Activated naive CD4-positive, alpha-beta T cell treated with anti-CD3 and anti-CD28 coated beads for 36 hours (primary cell): ENCODE measurements at regions of chr1 and their contacts with region 1.

Region 1: GRCh38 chr1:156096640-156097391 is 14.6 kb upstream of the MEX3A start:
- DNase-seq: peak; percentile 98
- H3K4me3 Mint-ChIP-seq: peak overlapping the region; percentile 40
- H3K27ac Mint-ChIP-seq: peak overlapping the region; percentile 99
- H3K4me1 Mint-ChIP-seq: peaks cover 49% of the 10 kb centered on the region
- H3K27me3 Mint-ChIP-seq: peaks cover 11% of the 10 kb centered on the region

Region 2: GRCh38 chr1:155920717-155921116 is 176.1 kb before region 1 on chr1:
- CTCF ChIA-PET with region 1: no interaction called
- intact Hi-C with region 1: no loop called
- DNase-seq: no peak
- H3K4me3 Mint-ChIP-seq: no peak overlapping the region
- H3K27ac Mint-ChIP-seq: no peak overlapping the region
- H3K4me1 Mint-ChIP-seq: peaks cover 11% of the 10 kb centered on the region
- H3K27me3 Mint-ChIP-seq: no peaks in the 10 kb centered on the region

Region 3: GRCh38 chr1:156045076-156045475 is 51.7 kb before region 1 on chr1:
- CTCF ChIA-PET with region 1: no interaction called
- intact Hi-C with region 1: no loop called
- DNase-seq: no peak
- H3K4me3 Mint-ChIP-seq: no peak overlapping the region
- H3K27ac Mint-ChIP-seq: no peak overlapping the region
- H3K4me1 Mint-ChIP-seq: no peaks in the 10 kb centered on the region
- H3K27me3 Mint-ChIP-seq: no peaks in the 10 kb centered on the region

Region 4: DNA sequence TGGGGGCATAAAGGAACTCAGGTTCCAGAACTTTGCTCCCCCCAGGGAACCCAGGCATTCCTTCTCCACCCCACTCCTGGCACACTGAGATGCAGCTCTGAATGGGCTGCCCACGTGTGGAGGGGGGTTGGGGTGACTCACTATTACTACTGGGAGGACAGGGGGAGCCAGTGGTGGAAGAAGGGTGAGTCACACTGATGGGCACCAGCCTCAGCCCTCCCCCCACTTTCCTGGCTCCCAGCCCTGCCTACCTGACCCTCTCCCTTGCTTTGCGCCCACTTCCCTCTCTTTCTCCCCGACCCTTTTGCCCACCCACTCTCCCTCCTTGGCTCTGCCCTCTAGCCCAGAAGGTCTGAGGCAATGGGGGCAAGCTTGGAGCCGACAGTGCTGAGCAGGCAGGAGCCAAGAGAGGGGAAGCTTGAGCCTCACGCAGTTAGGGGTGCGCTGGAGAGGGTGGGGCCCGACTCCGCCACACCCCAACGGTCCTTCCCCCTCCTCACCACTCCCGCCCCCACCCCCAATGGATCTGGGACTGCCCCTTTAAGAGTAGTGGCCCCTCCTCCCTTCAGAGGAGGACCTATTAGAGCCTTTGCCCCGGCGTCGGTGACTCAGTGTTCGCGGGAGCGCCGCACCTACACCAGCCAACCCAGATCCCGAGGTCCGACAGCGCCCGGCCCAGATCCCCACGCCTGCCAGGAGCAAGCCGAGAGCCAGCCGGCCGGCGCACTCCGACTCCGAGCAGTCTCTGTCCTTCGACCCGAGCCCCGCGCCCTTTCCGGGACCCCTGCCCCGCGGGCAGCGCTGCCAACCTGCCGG is 17.5 kb after region 1 on chr1 and contains the start of gene LMNA:
- CTCF ChIA-PET with region 1: interaction called, 34 read pairs
- intact Hi-C with region 1: loop called (anchors 1 kb)
- DNase-seq: peak; percentile 91
- H3K4me3 Mint-ChIP-seq: peak within 1 kb of the TSS; percentile 86
- H3K27ac Mint-ChIP-seq: peak within 1 kb of the TSS; percentile 50
- H3K4me1 Mint-ChIP-seq: peaks cover 32% of the 10 kb centered on the region
- H3K27me3 Mint-ChIP-seq: peaks cover 22% of the 10 kb centered on the region
- total RNA-seq, gene LMNA: 62.1 to 62.6 TPM

Region 5: GRCh38 chr1:156123356-156124196 is 26.8 kb after region 1 on chr1:
- CTCF ChIA-PET with region 1: interaction called, 737 read pairs
- intact Hi-C with region 1: loop called (anchors 1 kb)
- DNase-seq: peak; percentile 88
- H3K4me3 Mint-ChIP-seq: peak overlapping the region; percentile 32
- H3K27ac Mint-ChIP-seq: peak overlapping the region; percentile 72
- H3K4me1 Mint-ChIP-seq: peaks cover 63% of the 10 kb centered on the region
- H3K27me3 Mint-ChIP-seq: peaks cover 7% of the 10 kb centered on the region

Region 6: DNA sequence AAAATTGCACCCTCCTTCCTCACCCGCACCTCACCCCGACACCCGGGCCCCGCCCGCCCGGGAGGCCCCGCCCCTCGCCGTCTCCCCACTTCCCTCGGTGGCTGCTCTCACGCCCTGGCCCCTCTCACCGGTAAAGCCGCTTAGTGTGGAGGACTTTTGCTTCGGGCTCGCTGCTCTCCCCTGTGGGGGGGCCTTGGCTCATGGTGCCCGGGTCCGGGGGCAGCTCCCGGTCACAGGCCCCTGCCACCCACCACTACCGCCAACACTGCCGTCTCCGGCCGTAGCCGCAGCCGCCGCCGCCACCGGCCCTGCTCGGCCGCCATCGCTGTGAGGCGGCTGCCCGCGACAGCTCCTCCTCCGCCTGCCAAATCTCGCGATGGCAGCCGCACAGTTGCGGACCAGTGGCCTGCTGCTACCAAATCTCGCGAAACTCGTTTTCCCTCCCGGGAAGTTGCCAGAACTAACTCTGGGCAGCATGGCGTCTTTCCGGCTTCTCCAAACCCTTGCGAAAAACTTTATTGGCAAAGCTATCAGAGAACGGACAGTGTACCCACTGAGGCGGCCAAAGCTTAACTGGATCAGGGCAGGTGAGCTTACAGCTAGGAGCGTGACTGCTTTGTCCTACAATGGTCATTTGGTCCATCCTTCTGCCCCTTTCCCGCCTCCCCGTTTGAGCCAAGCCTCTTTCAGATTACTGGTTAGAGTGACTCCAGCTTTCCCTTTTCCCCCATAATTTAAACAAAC is 185.8 kb after region 1 on chr1 and contains the start of gene SMG5:
- CTCF ChIA-PET with region 1: interaction called, 3 read pairs
- intact Hi-C with region 1: loop called (anchors 2 kb)
- DNase-seq: peak; percentile 99
- H3K4me3 Mint-ChIP-seq: peak within 1 kb of the TSS; percentile 99
- H3K27ac Mint-ChIP-seq: peak within 1 kb of the TSS; percentile 92
- H3K4me1 Mint-ChIP-seq: peaks cover 27% of the 10 kb centered on the region
- H3K27me3 Mint-ChIP-seq: no peaks in the 10 kb centered on the region
- total RNA-seq, gene SMG5: 77.1 to 83.4 TPM

Region 7: DNA sequence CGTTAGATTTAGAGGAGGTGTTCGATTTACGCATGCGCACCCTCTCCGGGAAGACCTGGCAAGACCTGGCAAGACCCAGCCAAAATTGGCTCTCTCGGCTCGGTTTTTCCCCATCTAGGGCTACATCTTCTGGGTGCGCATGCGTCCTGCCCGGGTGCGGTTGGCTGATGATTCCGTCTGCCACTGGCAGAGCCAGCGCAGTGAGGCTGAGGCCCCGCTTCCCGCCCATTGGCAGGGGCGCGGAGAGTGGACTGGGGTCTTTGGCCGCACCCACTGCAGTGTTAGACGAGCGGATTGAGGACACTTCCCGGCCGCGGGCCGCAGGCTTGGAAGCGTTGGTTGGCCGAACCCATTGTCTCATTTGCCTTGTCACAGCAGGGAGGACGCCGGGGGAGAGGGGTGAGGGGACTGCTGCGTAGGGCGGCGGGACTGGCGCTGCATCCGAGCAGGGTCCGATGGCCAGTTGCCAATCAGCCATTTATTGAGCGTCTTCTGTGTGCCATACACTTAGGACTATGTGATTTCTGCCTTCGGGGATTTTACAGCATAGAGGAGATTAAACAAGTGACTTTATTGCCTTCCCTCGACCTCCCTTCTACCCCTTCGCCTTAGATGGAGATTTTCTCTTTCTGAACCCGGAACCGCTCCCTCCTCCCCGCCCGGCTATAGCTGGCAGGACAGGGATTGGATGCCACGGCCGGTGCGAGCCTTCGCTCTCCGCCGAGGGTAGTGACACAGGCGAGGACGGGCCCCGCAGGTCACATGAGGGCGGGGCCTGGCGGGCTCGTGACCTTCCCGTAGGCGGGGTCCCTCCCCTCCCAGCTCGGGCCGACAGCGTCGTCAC is 360.0 kb after region 1 on chr1:
- CTCF ChIA-PET with region 1: no interaction called
- intact Hi-C with region 1: loop called (anchors 5 kb)
- DNase-seq: peak; percentile 100
- H3K4me3 Mint-ChIP-seq: peak overlapping the region; percentile 86
- H3K27ac Mint-ChIP-seq: peak overlapping the region; percentile 97
- H3K4me1 Mint-ChIP-seq: peaks cover 10% of the 10 kb centered on the region
- H3K27me3 Mint-ChIP-seq: no peaks in the 10 kb centered on the region